ENCODE measurements at regions of chr1 and their contacts with region 1.

Region 1: GRCh38 chr1:153775458-153776327 is 486 bp downstream of the SLC27A3 start:
- DNase-seq: peak; percentile 42
- ATAC-seq: peak; percentile 86
- H3K4me3 ChIP-seq: peak overlapping the region; percentile 68 to 85
- H3K27ac ChIP-seq: peak overlapping the region; percentile 96
- H3K4me1 ChIP-seq: peaks cover 14 to 26% of the 10 kb centered on the region in 2 experiments
- H3K27me3 ChIP-seq: no peaks in the 10 kb centered on the region
- CTCF ChIP-seq: no peak; a peak in 1 of 6 replicates
- POLR2A ChIP-seq: peak; percentile 47
- RAD21 ChIP-seq: no peak

Region 2: GRCh38 chr1:153670859-153671627 is 104.7 kb before region 1 on chr1 and contains the start of gene ILF2:
- CTCF ChIA-PET with region 1: no interaction called
- POLR2A ChIA-PET with region 1: interaction called, 5 read pairs
- RAD21 ChIA-PET with region 1: interaction called in 1 of 2 experiments, 3 read pairs
- intact Hi-C with region 1: loop called (anchors 10 kb)
- DNase-seq: peak; percentile 99
- ATAC-seq: peak; percentile 86
- H3K4me3 ChIP-seq: peak within 1 kb of the TSS; percentile 73 to 97
- H3K27ac ChIP-seq: peak within 1 kb of the TSS; percentile 80
- H3K4me1 ChIP-seq: peaks cover 10 to 24% of the 10 kb centered on the region in 2 experiments
- H3K27me3 ChIP-seq: no peaks in the 10 kb centered on the region
- CTCF ChIP-seq: no peak; a peak in 1 of 6 replicates
- POLR2A ChIP-seq: peak; percentile 84
- RAD21 ChIP-seq: peak; percentile 21; the same call in 1 of the 2 replicates
- total RNA-seq, gene ILF2: 335 TPM

Measured in HCT116 (cell line).